ENCODE measurements at regions of chr3 and their contacts with region 1.

Region 1: DNA sequence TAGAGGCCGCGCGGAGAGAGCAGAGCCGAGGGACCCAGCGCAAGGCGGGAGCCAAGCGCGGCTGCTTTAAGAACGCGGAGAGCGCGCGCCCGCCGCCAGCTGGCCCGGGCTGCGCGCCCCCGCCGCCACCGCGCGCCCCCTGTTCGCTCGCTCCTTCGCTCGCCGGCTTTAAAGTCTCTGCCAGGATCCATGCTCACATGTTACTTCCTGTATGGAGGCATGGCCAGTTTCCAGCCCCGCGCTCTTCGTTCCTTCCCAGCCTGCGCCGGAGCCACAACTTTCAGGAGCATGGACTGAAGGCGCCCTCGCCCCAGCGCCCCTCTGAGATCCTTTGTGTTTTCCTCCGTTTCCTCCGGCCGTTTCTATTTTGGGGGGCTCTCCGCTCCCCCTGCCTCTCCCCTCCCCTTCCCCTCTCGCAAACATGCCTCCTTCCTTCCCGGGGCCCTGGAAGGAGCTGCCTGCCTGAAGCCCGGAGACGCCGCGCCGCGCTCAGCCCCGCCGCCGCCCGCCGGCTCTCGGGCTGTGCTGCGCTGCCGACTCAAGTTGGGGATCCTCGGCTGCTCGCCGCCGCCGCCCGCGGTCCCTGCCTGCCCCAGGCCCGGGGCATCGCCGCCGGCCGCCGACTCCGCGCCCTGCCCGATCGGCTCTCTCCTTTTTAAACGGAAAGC is at the start of gene PTPRG:
- DNase-seq: peak; percentile 87 to 90 (median 89)
- ATAC-seq: peak; percentile 87
- H3K4me3 ChIP-seq: peak within 1 kb of the TSS; percentile 61
- H3K4me1 ChIP-seq: no peaks in the 10 kb centered on the region
- CTCF ChIP-seq: no peak
- total RNA-seq, gene PTPRG: 28.9 to 54.7 (median 40.4) TPM

Region 2: DNA sequence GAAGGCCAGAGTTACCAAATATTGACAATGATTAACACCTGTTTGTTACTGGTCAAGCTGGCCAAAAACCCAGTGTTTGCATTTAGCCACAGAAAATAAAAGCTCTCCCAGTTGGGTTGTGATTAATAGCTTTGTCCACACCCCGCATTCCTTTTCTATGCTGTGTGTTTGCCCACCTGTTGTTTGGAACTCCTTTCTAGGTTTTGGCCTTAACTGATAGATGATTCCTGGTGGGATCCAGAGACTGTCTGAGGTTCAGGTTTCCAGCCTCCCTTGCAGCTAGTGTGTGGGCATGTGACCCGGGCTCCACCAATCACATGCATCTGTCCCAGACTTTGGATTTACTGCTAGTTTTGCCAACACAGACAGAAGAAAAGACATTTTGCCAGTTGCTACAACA is 83.6 kb after region 1 on chr3:
- intact Hi-C with region 1: loop called in 1 of 2 experiments (anchors 10 kb)
- DNase-seq: no peak
- ATAC-seq: no peak
- H3K4me3 ChIP-seq: no peak overlapping the region
- H3K4me1 ChIP-seq: peaks cover 9% of the 10 kb centered on the region
- CTCF ChIP-seq: no peak

Region 3: GRCh38 chr3:61807865-61808276 is 246.4 kb after region 1 on chr3:
- intact Hi-C with region 1: loop called in 1 of 2 experiments (anchors 10 kb)
- DNase-seq: no peak
- ATAC-seq: peak; percentile 10
- H3K4me3 ChIP-seq: no peak overlapping the region
- H3K4me1 ChIP-seq: peaks cover 14% of the 10 kb centered on the region
- CTCF ChIP-seq: no peak

Region 4: GRCh38 chr3:62188681-62189383 is 627.3 kb after region 1 on chr3:
- intact Hi-C with region 1: loop called in 1 of 2 experiments (anchors 10 kb)
- DNase-seq: peak in 2 of 3 donors; percentile 67 to 83
- ATAC-seq: peak; percentile 85
- H3K4me3 ChIP-seq: no peak overlapping the region
- H3K4me1 ChIP-seq: no peaks in the 10 kb centered on the region
- CTCF ChIP-seq: peak; percentile 47

Measured in mucosa of descending colon (tissue), 3 donors.